ENCODE measurements at regions of chr16 and their contacts with region 1.

Region 1: DNA sequence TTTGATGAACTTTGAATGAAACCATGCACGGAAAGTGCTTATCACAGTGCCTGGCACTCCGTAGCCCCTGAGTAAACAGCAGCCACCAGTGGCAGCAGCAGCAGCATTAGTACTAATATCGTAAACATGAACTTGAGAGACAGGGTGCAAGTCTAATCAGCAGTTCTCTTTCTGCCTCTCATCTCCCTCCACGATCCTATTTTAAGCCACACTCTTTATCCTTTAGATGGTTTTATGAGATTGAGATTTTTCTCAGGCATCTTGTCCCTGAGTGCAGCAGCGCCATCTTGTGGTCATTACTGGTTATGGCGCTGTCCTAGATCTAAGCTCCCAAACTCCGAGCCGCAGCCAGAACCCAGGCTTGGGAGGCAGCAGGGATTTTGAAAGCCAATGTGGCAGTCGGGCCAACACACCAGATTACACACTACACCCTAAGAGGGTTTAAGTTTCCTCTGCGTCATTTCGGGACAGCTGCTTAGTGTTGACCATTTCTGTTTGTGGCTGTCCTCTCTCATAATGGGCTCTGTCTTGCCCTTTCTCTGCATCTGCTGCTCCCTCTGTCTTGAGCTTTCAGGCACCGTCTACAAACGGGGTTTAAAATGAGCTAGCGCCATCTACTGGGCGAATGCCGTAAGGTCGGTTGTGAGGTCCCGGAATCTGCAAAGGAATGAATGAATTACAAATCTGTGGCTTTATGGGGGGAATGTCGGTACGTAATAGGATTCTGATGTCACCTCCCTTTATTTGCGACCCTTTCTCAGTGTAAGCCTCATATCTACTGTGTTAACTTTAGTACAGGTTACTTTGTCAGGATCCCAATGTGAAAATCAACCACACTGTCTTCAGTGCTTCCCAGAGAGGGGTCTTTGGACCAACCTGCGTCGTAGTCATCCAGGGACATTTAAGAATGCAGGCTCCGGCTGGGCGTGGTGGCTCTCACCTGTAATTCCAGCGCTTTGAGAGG is 64.5 kb downstream of the CYLD start:
- DNase-seq: peak; percentile 89
- H3K4me3 Mint-ChIP-seq: peak overlapping the region; percentile 45
- H3K27ac Mint-ChIP-seq: peak overlapping the region; percentile 67
- H3K4me1 Mint-ChIP-seq: peaks cover 15% of the 10 kb centered on the region
- H3K27me3 Mint-ChIP-seq: peaks cover 3% of the 10 kb centered on the region

Region 2: DNA sequence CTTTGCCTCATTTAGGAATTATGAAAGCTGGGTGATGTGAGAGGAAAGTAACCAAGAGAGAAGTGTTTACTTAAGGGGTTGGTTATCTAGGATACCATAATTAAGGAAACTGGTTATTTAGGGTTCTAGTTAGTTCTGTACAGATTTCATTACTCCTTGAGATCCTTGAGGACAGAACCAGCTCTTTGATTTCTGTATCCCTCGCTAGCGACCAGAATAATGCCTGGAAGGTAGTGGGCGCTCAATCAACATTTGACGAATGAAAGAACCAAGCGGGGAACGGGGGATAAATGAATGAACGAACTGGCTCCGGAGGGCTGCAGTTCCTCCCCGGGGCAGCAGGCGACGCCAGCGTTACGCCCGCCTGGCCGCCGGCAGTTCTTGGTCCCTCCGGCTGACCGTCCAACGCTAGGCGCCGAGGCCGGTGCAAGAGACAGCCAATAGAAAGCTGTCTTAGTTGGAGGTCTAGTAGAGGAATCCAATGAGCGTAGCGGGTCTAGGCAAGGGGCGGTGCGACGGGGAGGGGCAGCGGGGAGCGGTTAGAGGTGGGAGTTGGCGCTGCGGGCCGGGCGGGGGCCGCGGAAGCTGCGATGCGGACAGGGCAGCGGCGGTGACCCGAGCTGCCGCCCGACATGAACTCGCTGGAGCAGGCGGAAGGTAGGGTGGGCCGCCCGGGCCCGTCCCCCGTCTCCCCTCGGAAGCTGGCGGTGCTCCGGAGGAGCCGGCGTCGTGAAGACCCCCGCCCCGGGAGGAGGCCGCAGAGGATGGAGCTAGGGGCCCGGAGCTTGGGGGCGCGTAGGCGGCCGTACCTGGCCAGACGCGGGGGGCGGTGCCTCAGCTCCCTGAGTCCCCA is 781.5 kb before region 1 on chr16 and contains the start of gene CNEP1R1:
- CTCF ChIA-PET with region 1: interaction called, 12 read pairs
- DNase-seq: peak; percentile 94
- H3K4me3 Mint-ChIP-seq: peak within 1 kb of the TSS; percentile 88
- H3K27ac Mint-ChIP-seq: peak within 1 kb of the TSS; percentile 92
- H3K4me1 Mint-ChIP-seq: peaks cover 24% of the 10 kb centered on the region
- H3K27me3 Mint-ChIP-seq: no peaks in the 10 kb centered on the region

Region 3: DNA sequence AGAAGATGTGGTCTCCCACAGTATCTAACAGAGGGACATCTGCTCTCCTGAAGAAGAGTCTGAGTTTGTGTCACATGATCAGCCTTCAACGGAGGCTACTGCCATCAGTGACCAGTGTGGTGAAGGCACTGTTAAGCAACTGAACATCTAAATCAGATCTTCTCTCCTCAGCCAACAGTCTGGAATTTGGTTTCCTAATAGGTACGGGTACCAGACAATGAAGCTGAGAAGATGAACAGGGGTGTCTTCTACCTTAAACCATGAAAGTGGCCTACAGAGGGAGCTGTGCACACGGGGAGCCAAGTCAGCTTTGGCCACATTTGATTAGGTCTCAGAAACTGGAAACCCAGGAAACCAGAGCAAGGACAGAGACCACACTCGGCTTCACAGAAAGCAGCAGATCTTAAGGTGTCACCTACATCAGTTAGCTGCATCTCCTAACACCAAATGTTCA is 479.4 kb before region 1 on chr16:
- CTCF ChIA-PET with region 1: interaction called, 22 read pairs
- DNase-seq: peak; percentile 85
- H3K4me3 Mint-ChIP-seq: no peak overlapping the region
- H3K27ac Mint-ChIP-seq: peak overlapping the region; percentile 90
- H3K4me1 Mint-ChIP-seq: peaks cover 67% of the 10 kb centered on the region
- H3K27me3 Mint-ChIP-seq: no peaks in the 10 kb centered on the region

Region 4: DNA sequence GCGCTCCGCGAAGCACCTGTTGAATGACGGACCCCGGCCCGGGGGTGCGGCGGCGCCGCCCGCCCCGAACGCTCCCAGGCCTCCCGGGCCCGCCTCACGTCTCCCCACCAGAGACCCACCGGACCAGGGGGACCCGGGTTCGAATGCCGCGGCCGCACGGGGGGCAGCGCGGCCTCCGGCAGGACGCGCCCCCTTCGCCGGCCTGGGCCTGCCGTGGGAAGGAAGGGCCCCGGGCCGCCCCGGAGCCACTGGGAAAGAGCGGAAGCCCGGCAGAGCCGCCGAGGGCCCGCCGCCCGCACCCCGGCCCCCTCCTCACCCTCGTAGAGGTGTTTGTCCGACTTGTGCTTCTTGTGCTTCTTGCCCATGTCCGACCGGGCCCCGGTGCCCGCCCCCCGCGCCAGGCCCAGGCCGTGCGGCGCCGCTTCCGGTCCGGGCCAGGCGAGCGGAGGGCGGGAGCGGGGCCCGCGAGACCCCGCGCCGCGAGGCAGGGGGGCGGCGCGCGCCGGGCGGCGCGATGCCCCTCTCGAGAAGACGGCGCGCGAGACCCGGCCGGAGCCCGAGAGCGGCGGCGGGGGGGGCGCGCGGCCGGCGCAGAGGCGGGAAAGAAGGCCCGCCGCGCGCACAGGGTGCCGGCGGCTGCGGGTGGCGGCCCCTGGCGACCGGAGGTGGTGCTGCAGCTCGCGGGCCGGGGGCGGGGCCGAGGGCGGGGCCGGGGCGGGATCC is 437.8 kb before region 1 on chr16 and contains the start of gene BRD7:
- CTCF ChIA-PET with region 1: interaction called, 24 read pairs
- DNase-seq: peak; percentile 66
- H3K4me3 Mint-ChIP-seq: peak within 1 kb of the TSS; percentile 84
- H3K27ac Mint-ChIP-seq: peak within 1 kb of the TSS; percentile 85
- H3K4me1 Mint-ChIP-seq: peaks cover 47% of the 10 kb centered on the region
- H3K27me3 Mint-ChIP-seq: peaks cover 14% of the 10 kb centered on the region

Region 5: GRCh38 chr16:50681021-50681885 is 125.1 kb before region 1 on chr16 and contains the start of gene SNX20:
- CTCF ChIA-PET with region 1: interaction called, 15 read pairs
- DNase-seq: peak; percentile 82
- H3K4me3 Mint-ChIP-seq: peak within 1 kb of the TSS; percentile 92
- H3K27ac Mint-ChIP-seq: peak within 1 kb of the TSS; percentile 91
- H3K4me1 Mint-ChIP-seq: peaks cover 90% of the 10 kb centered on the region
- H3K27me3 Mint-ChIP-seq: no peaks in the 10 kb centered on the region

Region 6: GRCh38 chr16:50789757-50790156 is 16.6 kb before region 1 on chr16:
- CTCF ChIA-PET with region 1: interaction called, 16 read pairs
- DNase-seq: no peak
- H3K4me3 Mint-ChIP-seq: no peak overlapping the region
- H3K27ac Mint-ChIP-seq: no peak overlapping the region
- H3K4me1 Mint-ChIP-seq: peaks cover 2% of the 10 kb centered on the region
- H3K27me3 Mint-ChIP-seq: no peaks in the 10 kb centered on the region

Measured in activated naive CD4-positive, alpha-beta T cell treated with anti-CD3 and anti-CD28 coated beads, Interleukin-2, amount 10 ng/mL, durations not matched to agents 7 days and 5 days (primary cell).